SK-N-SH (cell line): ENCODE measurements at regions of chr11 and their contacts with region 1.

Region 1: GRCh38 chr11:95835768-95836488 is 45.6 kb downstream of the CEP57 start:
- DNase-seq: peak; percentile 55
- H3K4me3 ChIP-seq: no peak overlapping the region
- H3K27ac ChIP-seq: peak overlapping the region; percentile 43 to 61
- H3K4me1 ChIP-seq: peaks cover 2 to 4% of the 10 kb centered on the region in 2 experiments; a peak in 2 of 4 replicates
- H3K27me3 ChIP-seq: no peaks in the 10 kb centered on the region
- CTCF ChIP-seq: peak; percentile 95
- EP300 ChIP-seq: no peak
- RAD21 ChIP-seq: peak; percentile 89

Region 2: GRCh38 chr11:95790123-95790932 is 45.6 kb before region 1 on chr11 and contains the start of gene CEP57:
- CTCF ChIA-PET with region 1: interaction called, 10 read pairs
- POLR2A ChIA-PET with region 1: interaction called, 3 read pairs
- DNase-seq: peak; percentile 83
- H3K4me3 ChIP-seq: peak within 1 kb of the TSS; percentile 84 to 96
- H3K27ac ChIP-seq: peak within 1 kb of the TSS; percentile 94 to 97
- H3K4me1 ChIP-seq: peaks cover 8 to 33% of the 10 kb centered on the region in 2 experiments
- H3K27me3 ChIP-seq: no peaks in the 10 kb centered on the region
- CTCF ChIP-seq: no peak
- EP300 ChIP-seq: no peak
- RAD21 ChIP-seq: no peak
- polyA plus RNA-seq, gene CEP57: 12.2 and 16.0 TPM in 2 replicates

Region 3: DNA sequence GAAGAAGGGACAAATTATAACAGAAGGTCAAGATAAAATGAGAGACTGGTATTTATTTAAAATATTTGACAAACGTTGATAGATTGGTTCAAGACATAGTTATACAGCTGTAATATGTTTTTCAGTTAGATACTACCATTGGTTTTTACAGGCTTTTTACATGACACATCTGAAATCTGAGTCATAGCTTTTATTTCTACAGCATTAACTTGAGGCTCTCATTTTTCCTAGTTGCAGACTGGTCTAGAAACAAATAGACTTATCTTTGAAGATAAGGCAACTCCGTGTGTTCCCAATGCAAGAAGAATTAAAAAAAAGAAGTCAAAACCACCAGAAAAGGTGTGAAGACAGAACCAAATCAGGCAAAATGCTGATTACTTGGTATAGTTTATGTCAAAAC is 14.3 kb before region 1 on chr11:
- CTCF ChIA-PET with region 1: interaction called, 15 read pairs
- POLR2A ChIA-PET with region 1: no interaction called
- DNase-seq: no peak
- H3K4me3 ChIP-seq: no peak overlapping the region
- H3K27ac ChIP-seq: peak overlapping the region in 1 of 2 experiments; percentile 10; a peak in 1 of 4 replicates
- H3K4me1 ChIP-seq: no peaks in the 10 kb centered on the region
- H3K27me3 ChIP-seq: no peaks in the 10 kb centered on the region
- CTCF ChIP-seq: no peak
- EP300 ChIP-seq: no peak
- RAD21 ChIP-seq: no peak

Region 4: GRCh38 chr11:95849087-95849825 is 13.3 kb after region 1 on chr11:
- CTCF ChIA-PET with region 1: interaction called, 33 read pairs
- POLR2A ChIA-PET with region 1: no interaction called
- DNase-seq: peak; percentile 22
- H3K4me3 ChIP-seq: no peak overlapping the region; a peak in 1 of 4 replicates
- H3K27ac ChIP-seq: peak overlapping the region in 1 of 2 experiments; percentile 45; a peak in 2 of 4 replicates
- H3K4me1 ChIP-seq: peaks cover 0 to 6% of the 10 kb centered on the region in 2 experiments; a peak in 2 of 4 replicates
- H3K27me3 ChIP-seq: no peaks in the 10 kb centered on the region
- CTCF ChIP-seq: peak; percentile 70
- EP300 ChIP-seq: no peak
- RAD21 ChIP-seq: peak; percentile 64

Region 5: DNA sequence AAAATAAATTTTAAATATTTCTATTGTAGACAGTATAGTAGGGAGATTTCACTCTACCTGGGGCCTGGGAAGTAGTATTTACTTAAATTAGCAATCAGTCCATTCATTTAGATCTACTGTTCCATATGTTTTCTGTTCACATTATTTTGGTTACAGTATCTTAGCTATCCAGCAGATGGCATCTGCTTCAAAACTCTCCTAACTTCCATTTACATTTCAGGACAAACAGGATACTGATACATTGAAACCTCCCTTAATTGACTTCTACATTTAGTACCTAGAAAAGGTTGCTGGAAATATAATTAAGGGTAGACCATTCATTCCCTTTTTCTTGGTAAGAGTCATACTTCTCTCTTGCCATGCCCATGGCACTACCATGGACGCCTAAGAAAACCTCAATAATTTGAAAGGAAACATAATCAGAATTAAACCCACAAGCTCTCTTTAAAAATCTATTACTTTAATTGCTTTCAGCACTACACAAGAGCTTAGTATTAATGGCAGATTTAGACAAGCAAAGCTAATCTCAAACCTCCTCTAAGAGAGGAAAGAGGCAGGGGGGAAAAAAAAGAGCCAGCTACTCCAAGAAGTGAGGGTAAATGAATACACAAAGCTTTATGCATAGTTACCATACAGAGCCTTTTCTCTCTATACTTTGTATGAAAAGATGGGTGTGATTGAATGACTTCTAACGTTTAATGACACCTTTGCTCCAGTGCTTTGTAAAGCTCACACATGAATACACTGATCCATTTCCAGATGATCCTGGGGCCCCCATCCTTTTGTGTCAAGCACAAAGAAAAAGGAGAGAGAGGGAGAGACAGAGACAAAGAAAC is 219.2 kb after region 1 on chr11:
- CTCF ChIA-PET with region 1: interaction called, 11 read pairs
- POLR2A ChIA-PET with region 1: no interaction called
- DNase-seq: peak; percentile 38
- H3K4me3 ChIP-seq: no peak overlapping the region
- H3K27ac ChIP-seq: peak overlapping the region; percentile 84 to 86
- H3K4me1 ChIP-seq: peaks cover 7 to 58% of the 10 kb centered on the region in 2 experiments
- H3K27me3 ChIP-seq: no peaks in the 10 kb centered on the region
- CTCF ChIP-seq: peak; percentile 73
- EP300 ChIP-seq: no peak
- RAD21 ChIP-seq: peak; percentile 79

Region 6: DNA sequence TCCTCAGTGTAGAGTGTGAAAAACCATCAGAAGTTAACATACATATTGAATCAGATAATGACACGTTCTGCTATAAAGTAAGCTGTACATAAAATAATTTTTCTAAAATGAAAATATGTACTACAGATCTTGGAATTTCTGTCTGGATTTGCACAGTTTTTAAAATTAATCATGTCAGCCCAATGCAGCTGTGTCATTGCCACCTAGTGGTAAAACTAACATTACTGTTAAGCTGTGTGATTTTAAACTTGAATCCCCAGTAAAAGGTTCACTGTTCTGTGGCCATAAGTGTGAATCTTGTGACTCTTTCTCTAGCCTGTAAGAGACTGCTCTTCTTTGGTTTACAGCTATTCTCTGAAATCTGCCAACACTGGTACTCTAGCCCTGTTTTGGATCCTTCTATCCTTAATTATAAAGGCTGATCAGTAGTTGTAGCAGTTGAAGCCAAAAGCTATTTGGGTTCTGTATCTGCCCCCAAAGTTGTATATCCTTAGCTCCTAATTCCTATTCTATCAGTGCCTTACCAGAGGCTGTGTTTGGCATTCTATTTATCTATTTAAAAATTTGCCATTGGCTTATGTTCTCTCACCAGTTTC is 557.9 kb after region 1 on chr11:
- CTCF ChIA-PET with region 1: interaction called, 24 read pairs
- POLR2A ChIA-PET with region 1: interaction called, 3 read pairs
- DNase-seq: peak; percentile 45
- H3K4me3 ChIP-seq: peak overlapping the region in 1 of 2 experiments; percentile 25; a peak in 1 of 4 replicates
- H3K27ac ChIP-seq: peak overlapping the region; percentile 16 to 22; a peak in 3 of 4 replicates
- H3K4me1 ChIP-seq: peaks cover 11 to 14% of the 10 kb centered on the region in 2 experiments; a peak in 3 of 4 replicates
- H3K27me3 ChIP-seq: no peaks in the 10 kb centered on the region
- CTCF ChIP-seq: peak; percentile 81
- EP300 ChIP-seq: no peak
- RAD21 ChIP-seq: peak; percentile 72

Region 7: GRCh38 chr11:96424693-96425092 is 588.8 kb after region 1 on chr11:
- CTCF ChIA-PET with region 1: interaction called, 18 read pairs
- POLR2A ChIA-PET with region 1: no interaction called
- DNase-seq: no peak
- H3K4me3 ChIP-seq: no peak overlapping the region
- H3K27ac ChIP-seq: no peak overlapping the region
- H3K4me1 ChIP-seq: no peaks in the 10 kb centered on the region
- H3K27me3 ChIP-seq: no peaks in the 10 kb centered on the region
- CTCF ChIP-seq: no peak
- EP300 ChIP-seq: peak in 1 of 2 experiments; percentile 55; a peak in 1 of 4 replicates
- RAD21 ChIP-seq: no peak